PC-9 (cell line): ENCODE measurements at regions of chr6 and their contacts with region 1.

Region 1: DNA sequence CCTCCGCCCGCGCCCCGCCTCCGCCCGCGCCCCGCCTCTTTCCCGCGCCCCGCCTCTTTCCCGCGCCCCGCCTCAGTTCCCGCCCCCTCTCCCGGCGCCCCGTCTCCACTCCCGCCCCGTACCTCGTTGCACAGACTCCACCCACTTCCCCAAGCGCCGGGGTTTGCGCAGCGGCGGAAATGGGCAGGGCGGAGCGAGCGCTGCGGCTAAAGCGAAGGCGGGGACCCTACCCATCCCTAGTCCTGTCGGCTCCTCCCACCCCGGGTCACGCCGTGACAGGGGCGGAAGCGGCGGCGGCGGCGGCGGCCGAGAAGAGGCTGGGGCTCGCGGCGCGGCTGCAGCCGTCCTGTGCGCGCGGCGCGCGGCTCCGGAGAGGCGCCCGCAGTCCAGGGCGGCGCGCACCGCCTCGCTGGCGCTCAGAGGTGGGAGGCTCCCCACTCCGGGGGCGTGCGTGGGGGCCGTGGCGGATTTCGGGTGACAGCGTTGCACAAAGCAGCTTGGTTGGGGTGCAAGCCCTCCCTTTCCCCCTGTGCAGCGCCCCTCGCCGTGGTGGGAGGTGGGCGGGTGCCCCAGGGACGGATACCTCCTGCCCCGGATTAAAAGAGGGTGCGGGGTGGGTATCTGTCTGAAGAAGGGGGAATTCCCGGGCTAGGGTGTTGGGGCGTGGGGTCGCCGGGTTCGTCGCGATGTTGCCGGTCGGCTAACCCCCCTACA is at the start of gene KDM1B:
- DNase-seq: peak; percentile 88 to 99
- H3K4me3 ChIP-seq: peak within 1 kb of the TSS; percentile 95
- H3K27ac ChIP-seq: peak within 1 kb of the TSS; percentile 35
- H3K4me1 ChIP-seq: peaks cover 25% of the 10 kb centered on the region
- H3K27me3 ChIP-seq: no peaks in the 10 kb centered on the region
- CTCF ChIP-seq: no peak
- total RNA-seq, gene KDM1B: 15.6 and 21.5 TPM in 2 replicates

Region 2: DNA sequence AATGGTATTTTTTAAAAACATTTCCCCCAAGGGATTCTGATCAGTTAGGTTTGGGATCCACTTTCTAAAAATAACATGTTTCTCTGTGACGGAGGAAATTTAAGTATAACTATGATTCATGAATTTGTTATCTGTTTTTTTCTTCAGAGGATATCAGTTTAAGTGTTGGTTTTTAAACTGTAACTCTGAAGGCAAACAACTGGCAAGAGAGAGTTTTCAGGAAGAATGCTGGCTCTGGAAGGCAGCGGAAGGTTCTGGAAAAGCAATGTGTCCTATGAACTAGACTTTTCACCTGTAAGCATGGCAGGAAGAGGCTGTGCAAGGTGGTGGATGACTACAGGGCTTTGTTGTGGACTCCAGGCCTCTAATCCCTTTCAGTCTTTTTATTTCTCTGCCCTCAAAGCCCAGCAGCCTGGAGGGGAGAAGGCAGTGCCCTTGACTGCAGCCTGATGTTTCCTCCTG is 1763.8 kb before region 1 on chr6:
- CTCF ChIA-PET with region 1: no interaction called
- POLR2A ChIA-PET with region 1: no interaction called
- intact Hi-C with region 1: no loop called
- DNase-seq: no peak
- H3K4me3 ChIP-seq: no peak overlapping the region
- H3K27ac ChIP-seq: no peak overlapping the region
- H3K4me1 ChIP-seq: no peaks in the 10 kb centered on the region
- H3K27me3 ChIP-seq: no peaks in the 10 kb centered on the region
- CTCF ChIP-seq: no peak

Region 3: GRCh38 chr6:17917837-17918763 is 237.2 kb before region 1 on chr6:
- CTCF ChIA-PET with region 1: no interaction called
- POLR2A ChIA-PET with region 1: no interaction called
- intact Hi-C with region 1: no loop called
- DNase-seq: no peak
- H3K4me3 ChIP-seq: no peak overlapping the region
- H3K27ac ChIP-seq: no peak overlapping the region
- H3K4me1 ChIP-seq: no peaks in the 10 kb centered on the region
- H3K27me3 ChIP-seq: no peaks in the 10 kb centered on the region
- CTCF ChIP-seq: no peak

Region 4: GRCh38 chr6:18081362-18082006 is 73.8 kb before region 1 on chr6:
- CTCF ChIA-PET with region 1: no interaction called
- POLR2A ChIA-PET with region 1: no interaction called
- intact Hi-C with region 1: no loop called
- DNase-seq: no peak
- H3K4me3 ChIP-seq: no peak overlapping the region
- H3K27ac ChIP-seq: no peak overlapping the region
- H3K4me1 ChIP-seq: no peaks in the 10 kb centered on the region
- H3K27me3 ChIP-seq: no peaks in the 10 kb centered on the region
- CTCF ChIP-seq: no peak

Region 5: GRCh38 chr6:18323935-18324705 is 168.8 kb after region 1 on chr6:
- CTCF ChIA-PET with region 1: no interaction called
- POLR2A ChIA-PET with region 1: no interaction called
- intact Hi-C with region 1: loop called (anchors 10 kb)
- DNase-seq: peak; percentile 27 to 51
- H3K4me3 ChIP-seq: no peak overlapping the region
- H3K27ac ChIP-seq: no peak overlapping the region
- H3K4me1 ChIP-seq: no peaks in the 10 kb centered on the region
- H3K27me3 ChIP-seq: no peaks in the 10 kb centered on the region
- CTCF ChIP-seq: peak; percentile 85